ENCODE measurements at regions of chr1 and their contacts with region 1.

Region 1: DNA sequence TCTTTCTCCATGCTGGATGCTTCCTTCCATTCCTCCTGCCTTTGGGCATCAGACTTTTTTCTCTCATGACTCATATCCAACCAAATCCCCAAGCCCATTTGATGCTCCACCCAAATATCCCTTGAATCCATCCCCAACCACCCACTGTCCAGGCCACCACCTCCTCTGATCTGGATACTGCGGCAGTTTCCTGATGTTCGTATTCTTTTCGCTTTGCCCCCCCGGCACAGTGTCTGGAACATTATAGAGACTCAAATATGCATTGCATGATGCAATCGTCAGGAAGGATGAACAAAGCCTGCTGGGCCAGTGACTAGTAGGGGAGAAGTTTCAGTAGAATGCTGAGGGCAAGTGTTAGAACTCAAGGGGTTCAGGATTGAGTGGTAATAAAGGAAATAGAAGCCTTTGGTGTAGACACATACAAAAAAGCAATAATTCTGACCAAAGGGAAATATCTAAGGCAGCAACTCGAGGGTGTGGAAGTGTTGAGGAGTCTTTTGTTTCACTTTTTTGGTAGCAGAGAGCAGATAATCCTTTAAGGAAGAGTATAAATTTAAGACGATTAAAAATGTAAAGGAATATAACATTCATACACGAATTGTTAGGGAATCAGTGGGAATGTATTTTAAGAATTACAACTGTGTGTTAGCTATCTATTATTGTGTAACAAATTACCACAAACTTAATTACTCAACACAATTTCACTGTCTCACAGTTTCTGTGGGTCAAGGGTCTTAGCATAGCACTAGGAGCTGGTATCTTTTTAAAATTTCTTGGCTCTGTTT is 7.5 kb downstream of the S100A11 start:
- DNase-seq: peak; percentile 54
- ATAC-seq: peak; percentile 60
- H3K4me3 Mint-ChIP-seq: no peak overlapping the region
- H3K27ac Mint-ChIP-seq: peak overlapping the region; percentile 91
- H3K4me1 Mint-ChIP-seq: peaks cover 34% of the 10 kb centered on the region
- H3K27me3 Mint-ChIP-seq: no peaks in the 10 kb centered on the region
- CTCF ChIP-seq: no peak

Region 2: DNA sequence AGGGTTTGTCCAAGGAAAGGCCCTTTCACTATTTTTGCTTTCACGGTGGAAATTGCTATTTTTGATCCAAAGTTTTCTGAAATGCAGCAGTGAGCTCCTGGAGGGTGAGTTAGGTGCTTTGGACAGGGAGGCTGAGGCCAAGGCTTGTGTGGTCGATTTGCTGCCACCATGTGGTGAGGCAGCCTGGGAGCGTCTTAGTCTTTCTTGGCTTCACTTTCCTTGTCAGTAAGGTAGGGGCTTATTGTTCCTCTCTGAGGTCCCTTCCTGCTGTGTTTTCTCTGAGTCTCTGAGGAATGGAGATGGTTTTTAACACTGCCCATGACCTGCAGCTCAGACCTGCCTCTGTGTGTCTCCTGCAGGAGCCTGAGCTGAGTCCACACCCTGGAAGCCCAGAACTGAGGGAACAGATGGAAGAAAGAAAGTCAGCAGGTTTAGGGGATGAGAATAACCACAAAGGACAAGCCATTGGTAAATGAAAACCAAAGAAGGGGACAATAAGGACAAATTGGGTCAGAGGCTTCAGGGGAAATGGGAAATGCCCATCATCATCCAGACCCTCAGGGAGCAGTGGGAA is 15.6 kb before region 1 on chr1:
- CTCF ChIA-PET with region 1: interaction called, 18 read pairs
- POLR2A ChIA-PET with region 1: interaction called, 4 read pairs
- intact Hi-C with region 1: no loop called
- DNase-seq: peak; percentile 66
- ATAC-seq: peak; percentile 60
- H3K4me3 Mint-ChIP-seq: no peak overlapping the region
- H3K27ac Mint-ChIP-seq: no peak overlapping the region
- H3K4me1 Mint-ChIP-seq: peaks cover 3% of the 10 kb centered on the region
- H3K27me3 Mint-ChIP-seq: peaks cover 12% of the 10 kb centered on the region
- CTCF ChIP-seq: peak; percentile 60

Region 3: GRCh38 chr1:152078831-152079441 is 49.6 kb after region 1 on chr1:
- CTCF ChIA-PET with region 1: no interaction called
- POLR2A ChIA-PET with region 1: no interaction called
- intact Hi-C with region 1: no loop called
- DNase-seq: no peak
- ATAC-seq: no peak
- H3K4me3 Mint-ChIP-seq: no peak overlapping the region
- H3K27ac Mint-ChIP-seq: no peak overlapping the region
- H3K4me1 Mint-ChIP-seq: no peaks in the 10 kb centered on the region
- H3K27me3 Mint-ChIP-seq: peaks cover 17% of the 10 kb centered on the region
- CTCF ChIP-seq: no peak

Measured in activated CD8-positive, alpha-beta T cell treated with anti-CD3 and anti-CD28 coated beads for 36 hours (primary cell).